ENCODE measurements at regions of chr12 and their contacts with region 1.

Region 1: DNA sequence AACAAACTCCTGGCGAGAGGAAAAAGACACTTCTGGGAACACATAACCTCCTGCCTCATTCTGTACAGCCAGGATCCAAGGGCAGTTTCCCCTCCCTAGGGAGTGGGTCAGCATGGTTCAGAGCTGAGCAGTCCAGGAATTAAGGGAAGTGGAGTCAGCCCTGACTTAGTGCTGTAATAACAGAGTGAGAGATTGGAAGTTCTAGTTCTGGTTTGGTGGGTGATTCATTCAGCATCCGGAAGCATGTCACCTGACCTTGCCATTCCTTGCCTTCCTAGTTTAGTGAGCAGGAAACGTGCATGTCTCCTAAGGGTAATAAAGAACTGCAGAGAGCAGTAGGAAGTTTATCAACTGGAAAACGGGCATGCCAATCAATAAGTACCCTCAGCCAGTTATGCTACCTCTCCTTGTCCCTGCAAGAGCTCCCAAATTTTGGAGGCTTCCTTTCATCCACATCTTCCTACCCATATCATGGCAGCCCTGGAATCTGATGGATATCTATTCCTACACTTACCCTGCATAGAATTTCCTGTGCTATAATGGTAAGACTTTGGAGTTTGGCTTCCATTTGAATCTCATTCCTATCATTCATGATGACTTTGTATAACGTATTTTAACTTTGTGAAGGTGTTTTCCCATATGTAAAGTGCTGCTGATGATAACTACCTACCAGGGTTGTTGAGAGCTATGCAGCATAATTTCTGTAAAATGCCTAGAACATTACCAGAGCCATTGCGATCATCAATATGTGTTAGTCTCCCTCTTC is 28.5 kb upstream of the MAGOHB start:
- DNase-seq: peak; percentile 99
- H3K4me3 ChIP-seq: peak overlapping the region in 1 of 3 experiments; percentile 43
- H3K27ac ChIP-seq: peak overlapping the region; percentile 98
- H3K4me1 ChIP-seq: peaks cover 48% of the 10 kb centered on the region
- H3K27me3 ChIP-seq: no peaks in the 10 kb centered on the region
- CTCF ChIP-seq: no peak
- POLR2A ChIP-seq: peak; percentile 95

Region 2: GRCh38 chr12:10613349-10614055 is 28.4 kb before region 1 on chr12 and contains the start of gene MAGOHB:
- CTCF ChIA-PET with region 1: interaction called, 8 read pairs
- POLR2A ChIA-PET with region 1: interaction called, 4 read pairs
- dilution Hi-C with region 1: no loop called
- intact Hi-C with region 1: loop called (anchors 1 kb)
- DNase-seq: peak; percentile 95
- H3K4me3 ChIP-seq: peak within 1 kb of the TSS; percentile 58 to 96 (median 93)
- H3K27ac ChIP-seq: peak within 1 kb of the TSS; percentile 90
- H3K4me1 ChIP-seq: peaks cover 18% of the 10 kb centered on the region
- H3K27me3 ChIP-seq: no peaks in the 10 kb centered on the region
- CTCF ChIP-seq: no peak
- POLR2A ChIP-seq: peak; percentile 70
- total RNA-seq, gene MAGOHB: 45.4 and 48.3 TPM in 2 replicates

Region 3: GRCh38 chr12:10624605-10625004 is 17.3 kb before region 1 on chr12:
- CTCF ChIA-PET with region 1: interaction called, 5 read pairs
- POLR2A ChIA-PET with region 1: no interaction called
- dilution Hi-C with region 1: no loop called
- intact Hi-C with region 1: loop called (anchors 2 kb)
- DNase-seq: no peak
- H3K4me3 ChIP-seq: no peak overlapping the region
- H3K27ac ChIP-seq: no peak overlapping the region
- H3K4me1 ChIP-seq: peaks cover 5% of the 10 kb centered on the region
- H3K27me3 ChIP-seq: no peaks in the 10 kb centered on the region
- CTCF ChIP-seq: no peak
- POLR2A ChIP-seq: no peak

Region 4: DNA sequence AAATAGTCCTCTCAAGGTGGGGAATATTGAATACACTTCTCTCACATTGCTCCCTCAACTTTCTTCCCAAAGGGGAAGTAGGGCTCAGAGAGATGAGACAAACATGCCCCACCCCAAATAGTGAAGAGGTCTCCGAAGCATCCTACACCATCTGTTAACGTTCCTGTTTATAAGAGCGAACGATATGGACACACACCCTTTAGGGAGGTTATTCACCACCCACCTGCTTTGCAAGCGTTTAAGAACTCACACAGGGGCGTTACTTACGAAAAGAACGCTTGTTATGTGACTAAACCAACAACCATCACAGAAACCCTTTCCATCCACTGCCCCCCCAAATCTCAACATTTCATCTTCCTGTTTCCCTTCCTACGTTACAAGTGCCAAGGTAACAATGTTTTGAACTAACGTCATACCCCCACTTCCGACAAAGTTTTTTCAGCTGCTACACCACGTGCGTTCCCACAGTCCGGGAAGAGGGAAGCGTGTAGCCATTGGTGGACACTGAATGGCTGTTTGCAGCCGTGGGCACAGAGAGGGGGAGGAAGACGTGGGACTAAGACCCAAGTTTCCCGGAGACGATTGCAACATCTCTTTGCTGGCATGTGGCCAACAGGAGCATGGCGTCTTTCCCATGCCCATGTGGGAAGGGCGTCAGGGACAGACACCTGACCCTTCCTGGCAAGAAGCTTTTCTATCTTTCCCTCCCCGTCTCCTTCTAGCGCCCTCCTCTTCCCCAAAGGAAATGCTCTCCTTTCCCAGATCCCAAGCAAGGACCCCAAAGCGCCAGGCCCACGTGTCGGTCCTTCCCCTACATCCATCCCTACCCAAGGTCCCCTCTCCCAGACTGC is 80.0 kb after region 1 on chr12:
- CTCF ChIA-PET with region 1: interaction called, 4 read pairs
- POLR2A ChIA-PET with region 1: no interaction called
- dilution Hi-C with region 1: no loop called
- intact Hi-C with region 1: loop called (anchors 1 kb)
- DNase-seq: peak; percentile 100
- H3K4me3 ChIP-seq: peak overlapping the region; percentile 87 to 92 (median 88)
- H3K27ac ChIP-seq: peak overlapping the region; percentile 98
- H3K4me1 ChIP-seq: peaks cover 57% of the 10 kb centered on the region
- H3K27me3 ChIP-seq: no peaks in the 10 kb centered on the region
- CTCF ChIP-seq: no peak
- POLR2A ChIP-seq: peak; percentile 39

Measured in endothelial cell of umbilical vein (primary cell).